Lower lobe of right lung (tissue), 2 donors: ENCODE measurements at regions of chr2 and their contacts with region 1.

Region 1: GRCh38 chr2:66445925-66446860 is 11.3 kb downstream of the MEIS1 start:
- DNase-seq: peak; percentile 47
- ATAC-seq: peak; percentile 62 to 71
- H3K4me3 ChIP-seq: peak overlapping the region; percentile 71
- H3K27ac ChIP-seq: peak overlapping the region; percentile 91
- H3K4me1 ChIP-seq: peaks cover 5% of the 10 kb centered on the region
- H3K27me3 ChIP-seq: peaks cover 28% of the 10 kb centered on the region
- CTCF ChIP-seq: no peak

Region 2: GRCh38 chr2:66070721-66071602 is 375.2 kb before region 1 on chr2:
- intact Hi-C with region 1: no loop called
- DNase-seq: no peak
- ATAC-seq: no peak
- H3K4me3 ChIP-seq: no peak overlapping the region
- H3K27ac ChIP-seq: no peak overlapping the region
- H3K4me1 ChIP-seq: no peaks in the 10 kb centered on the region
- H3K27me3 ChIP-seq: no peaks in the 10 kb centered on the region
- CTCF ChIP-seq: no peak

Region 3: DNA sequence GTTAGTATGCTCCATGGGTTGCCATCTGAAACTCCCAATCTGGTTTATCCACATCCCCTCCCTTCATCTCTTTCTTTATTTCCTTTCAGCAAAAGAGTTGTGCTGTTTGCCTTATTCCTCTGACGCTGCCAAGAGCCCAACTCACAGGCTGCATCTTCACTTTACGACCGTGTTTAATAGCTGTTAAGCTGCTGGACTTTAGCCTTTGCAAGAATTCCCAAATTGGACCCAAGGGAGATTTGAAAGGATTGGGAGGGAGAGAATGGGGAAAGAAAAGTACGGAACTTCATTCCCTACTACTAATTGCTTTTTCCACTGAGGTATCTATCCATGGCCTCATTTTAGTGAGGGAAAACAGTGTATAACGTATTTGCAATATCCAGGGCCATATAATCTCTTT is 274.7 kb before region 1 on chr2:
- intact Hi-C with region 1: no loop called
- DNase-seq: no peak
- ATAC-seq: no peak
- H3K4me3 ChIP-seq: no peak overlapping the region
- H3K27ac ChIP-seq: no peak overlapping the region
- H3K4me1 ChIP-seq: no peaks in the 10 kb centered on the region
- H3K27me3 ChIP-seq: no peaks in the 10 kb centered on the region
- CTCF ChIP-seq: no peak

Region 4: GRCh38 chr2:66574701-66575624 is 128.8 kb after region 1 on chr2:
- intact Hi-C with region 1: loop called (anchors 10 kb)
- DNase-seq: no peak
- ATAC-seq: peak; percentile 46 to 64
- H3K4me3 ChIP-seq: peak overlapping the region; percentile 56
- H3K27ac ChIP-seq: peak overlapping the region; percentile 89
- H3K4me1 ChIP-seq: peaks cover 40% of the 10 kb centered on the region
- H3K27me3 ChIP-seq: peaks cover 54% of the 10 kb centered on the region
- CTCF ChIP-seq: peak; percentile 42